AG04450 (cell line): ENCODE measurements at regions of chr12 and their contacts with region 1.

Region 1: GRCh38 chr12:71746983-71747611 is 7.6 kb upstream of the RAB21 start:
- DNase-seq: peak; percentile 42
- H3K4me3 ChIP-seq: no peak overlapping the region
- H3K27ac ChIP-seq: no peak overlapping the region
- H3K27me3 ChIP-seq: peaks cover 18% of the 10 kb centered on the region
- CTCF ChIP-seq: peak; percentile 76

Region 2: GRCh38 chr12:71415336-71416231 is 331.5 kb before region 1 on chr12:
- CTCF ChIA-PET with region 1: interaction called, 144 read pairs
- POLR2A ChIA-PET with region 1: no interaction called
- DNase-seq: peak; percentile 20
- H3K4me3 ChIP-seq: no peak overlapping the region
- H3K27ac ChIP-seq: no peak overlapping the region
- H3K27me3 ChIP-seq: no peaks in the 10 kb centered on the region
- CTCF ChIP-seq: peak; percentile 86

Region 3: GRCh38 chr12:71610031-71610795 is 136.9 kb before region 1 on chr12:
- CTCF ChIA-PET with region 1: interaction called, 10 read pairs
- POLR2A ChIA-PET with region 1: no interaction called
- DNase-seq: no peak
- H3K4me3 ChIP-seq: no peak overlapping the region
- H3K27ac ChIP-seq: no peak overlapping the region
- H3K27me3 ChIP-seq: no peaks in the 10 kb centered on the region
- CTCF ChIP-seq: no peak

Region 4: GRCh38 chr12:71636704-71637115 is 110.4 kb before region 1 on chr12:
- CTCF ChIA-PET with region 1: interaction called, 43 read pairs
- POLR2A ChIA-PET with region 1: no interaction called
- DNase-seq: peak; percentile 27
- H3K4me3 ChIP-seq: no peak overlapping the region
- H3K27ac ChIP-seq: no peak overlapping the region
- H3K27me3 ChIP-seq: no peaks in the 10 kb centered on the region
- CTCF ChIP-seq: peak; percentile 74

Region 5: DNA sequence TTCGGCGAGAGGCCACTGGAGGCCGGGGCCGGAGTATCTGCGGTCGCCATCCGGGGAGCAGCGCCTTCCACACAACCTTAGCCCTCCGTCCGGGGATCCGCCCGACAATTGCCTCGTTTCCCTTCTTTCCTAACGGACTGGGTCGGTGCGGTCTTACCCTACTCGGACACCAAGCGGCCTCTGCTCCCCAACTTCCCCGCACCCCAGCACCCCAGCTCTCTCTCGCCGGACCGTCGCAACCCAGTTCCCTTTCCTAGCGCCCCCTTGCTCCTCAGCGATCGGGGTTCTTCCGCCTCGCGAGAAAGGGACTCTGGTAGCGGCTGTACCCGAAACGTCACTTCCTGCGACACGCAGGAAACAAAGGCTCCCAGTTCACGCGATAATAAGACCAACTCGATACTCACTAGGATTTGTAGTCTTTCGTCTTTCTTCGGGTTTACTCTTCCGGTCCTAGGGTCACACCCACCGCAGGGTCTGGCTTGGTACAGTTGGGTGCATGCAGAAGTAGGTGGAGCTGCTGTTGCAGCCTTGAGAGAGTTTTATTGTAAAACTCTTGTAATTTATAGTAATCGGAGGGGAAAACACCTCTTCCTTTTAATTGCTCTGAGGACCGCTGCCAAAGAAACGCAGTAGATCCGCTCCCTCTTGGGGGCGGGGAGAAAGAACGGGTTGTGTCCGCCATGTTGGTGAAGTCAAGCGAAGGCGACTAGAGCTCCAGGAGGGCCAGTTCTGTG is 83.4 kb before region 1 on chr12 and contains the start of gene ZFC3H1:
- CTCF ChIA-PET with region 1: interaction called, 35 read pairs
- POLR2A ChIA-PET with region 1: interaction called, 15 read pairs
- DNase-seq: peak; percentile 98
- H3K4me3 ChIP-seq: peak within 1 kb of the TSS; percentile 96
- H3K27ac ChIP-seq: peak within 1 kb of the TSS; percentile 98
- H3K27me3 ChIP-seq: no peaks in the 10 kb centered on the region
- CTCF ChIP-seq: peak; percentile 45
- polyA plus RNA-seq, gene ZFC3H1: 38.4 and 55.5 TPM in 2 replicates

Region 6: DNA sequence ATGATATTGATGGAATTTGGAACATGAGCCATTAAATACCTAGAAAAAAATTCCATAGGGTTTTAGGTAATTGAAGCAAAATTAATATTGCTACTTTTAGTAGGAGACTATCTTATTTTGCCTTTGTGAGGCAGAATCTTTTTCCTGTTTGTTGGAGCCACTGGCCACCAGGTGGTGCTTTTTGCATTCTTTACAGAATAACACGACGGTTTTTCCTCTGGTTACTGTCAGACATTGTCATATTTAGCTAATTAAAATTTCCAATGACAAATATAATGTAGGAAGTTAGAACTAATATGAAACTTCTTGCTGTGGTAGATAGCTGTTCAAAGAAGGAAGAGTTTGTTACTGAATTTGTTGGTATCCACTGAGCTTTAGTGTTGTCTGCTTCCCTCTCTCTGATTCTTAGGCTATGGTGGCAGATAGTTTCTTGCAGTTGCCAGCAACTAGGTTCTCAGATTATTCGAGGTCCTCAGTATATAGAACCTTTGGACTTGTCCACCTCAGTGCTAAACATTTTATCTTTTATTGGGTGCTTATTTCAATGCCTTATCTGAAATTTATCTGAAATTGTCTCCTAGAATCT is 33.2 kb after region 1 on chr12:
- CTCF ChIA-PET with region 1: interaction called, 12 read pairs
- POLR2A ChIA-PET with region 1: no interaction called
- DNase-seq: no peak
- H3K4me3 ChIP-seq: no peak overlapping the region
- H3K27ac ChIP-seq: no peak overlapping the region
- H3K27me3 ChIP-seq: no peaks in the 10 kb centered on the region
- CTCF ChIP-seq: peak; percentile 78